Colonic mucosa (tissue), 4 donors: ENCODE measurements at regions of chr10 and their contacts with region 1.

Region 1: GRCh38 chr10:42552493-42553407 is 85.6 kb downstream of the ZNF33B start:
- DNase-seq: peak; percentile 98
- H3K4me3 ChIP-seq: peak overlapping the region; percentile 91
- H3K27ac ChIP-seq: peak overlapping the region; percentile 56
- H3K4me1 ChIP-seq: peaks cover 5% of the 10 kb centered on the region
- H3K27me3 ChIP-seq: no peaks in the 10 kb centered on the region
- CTCF ChIP-seq: no peak

Region 2: DNA sequence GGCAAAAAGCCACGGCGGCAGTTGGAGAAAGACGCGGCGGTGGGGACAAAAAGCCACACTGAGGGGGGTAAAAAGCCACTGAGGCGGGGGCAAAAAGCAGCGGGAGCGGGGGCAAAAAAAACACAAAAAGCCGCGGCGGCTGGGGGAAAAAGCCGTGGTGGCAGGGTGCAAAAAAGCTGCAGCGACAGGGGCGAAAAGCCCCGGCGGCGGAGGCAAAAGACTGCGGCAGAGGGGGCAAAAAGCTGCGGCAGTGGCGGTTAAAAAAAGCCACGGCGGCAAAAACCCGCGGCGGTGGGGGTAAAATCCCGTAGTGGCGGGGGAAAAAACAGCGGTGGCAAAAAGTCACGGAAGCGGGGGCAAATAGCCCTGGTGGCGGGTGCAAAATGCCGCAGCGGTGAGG is 441.7 kb before region 1 on chr10:
- intact Hi-C with region 1: no loop called
- DNase-seq: no peak
- H3K4me3 ChIP-seq: no peak overlapping the region
- H3K27ac ChIP-seq: no peak overlapping the region
- H3K4me1 ChIP-seq: no peaks in the 10 kb centered on the region
- H3K27me3 ChIP-seq: no peaks in the 10 kb centered on the region
- CTCF ChIP-seq: no peak

Region 3: GRCh38 chr10:42640610-42641229 is 88.0 kb after region 1 on chr10:
- intact Hi-C with region 1: loop called (anchors 5 kb)
- DNase-seq: peak; percentile 65
- H3K4me3 ChIP-seq: no peak overlapping the region
- H3K27ac ChIP-seq: peak overlapping the region; percentile 80
- H3K4me1 ChIP-seq: no peaks in the 10 kb centered on the region
- H3K27me3 ChIP-seq: no peaks in the 10 kb centered on the region
- CTCF ChIP-seq: no peak